BJ (cell line): ENCODE measurements at regions of chr20 and their contacts with region 1.

Region 1: GRCh38 chr20:31514159-31515071 is at the start of gene HM13:
- DNase-seq: peak; percentile 51
- H3K4me3 ChIP-seq: peak within 1 kb of the TSS; percentile 96
- H3K27me3 ChIP-seq: no peaks in the 10 kb centered on the region
- CTCF ChIP-seq: peak; percentile 81
- polyA plus RNA-seq, gene HM13: 236 and 324 TPM in 2 replicates

Region 2: DNA sequence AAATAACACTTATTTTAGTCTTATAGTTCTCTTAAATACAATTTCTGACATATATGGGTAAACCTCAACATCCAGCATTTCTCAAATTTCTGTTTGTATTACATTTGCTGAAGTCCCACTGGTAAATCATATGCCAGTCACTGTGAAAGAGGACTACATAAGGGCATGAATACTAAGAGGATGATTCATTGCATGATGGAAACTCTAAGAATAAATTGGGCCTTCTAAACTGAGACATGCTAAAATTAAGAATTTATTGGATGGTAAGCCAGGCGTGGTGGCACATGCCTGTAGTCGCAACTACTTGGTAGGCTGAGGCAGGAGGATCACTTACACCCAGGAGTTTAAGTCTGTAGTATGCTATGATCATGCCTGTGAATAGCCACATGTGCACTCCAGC is 61.8 kb before region 1 on chr20:
- CTCF ChIA-PET with region 1: interaction called, 4 read pairs
- POLR2A ChIA-PET with region 1: interaction called, 12 read pairs
- DNase-seq: no peak
- H3K4me3 ChIP-seq: no peak overlapping the region
- H3K27me3 ChIP-seq: no peaks in the 10 kb centered on the region
- CTCF ChIP-seq: no peak

Region 3: GRCh38 chr20:31595654-31596411 is 81.4 kb after region 1 on chr20:
- CTCF ChIA-PET with region 1: no interaction called
- POLR2A ChIA-PET with region 1: no interaction called
- DNase-seq: peak; percentile 95
- H3K4me3 ChIP-seq: no peak overlapping the region
- H3K27me3 ChIP-seq: no peaks in the 10 kb centered on the region
- CTCF ChIP-seq: no peak